ENCODE measurements at regions of chr11 and their contacts with region 1.

Region 1: GRCh38 chr11:111982019-111982464 is 43.2 kb upstream of the DLAT start:
- DNase-seq: peak; percentile 41 to 89 (median 60)
- H3K4me3 ChIP-seq: no peak overlapping the region
- H3K27ac ChIP-seq: peak overlapping the region in 1 of 5 donors; percentile 59
- H3K4me1 ChIP-seq: peaks cover 6 to 24% of the 10 kb centered on the region in 2 donors
- H3K27me3 ChIP-seq: no peaks in the 10 kb centered on the region
- CTCF ChIP-seq: peak; percentile 26 to 70 (median 58)
- POLR2A ChIP-seq: no peak

Region 2: GRCh38 chr11:111878849-111879636 is 103.0 kb before region 1 on chr11 and contains the starts of genes CFAP68 and FDXACB1:
- intact Hi-C with region 1: loop called (anchors 5 to 10 kb)
- DNase-seq: peak; percentile 96 to 99 (median 98)
- H3K4me3 ChIP-seq: peak within 1 kb of the TSS; percentile 21 to 90 (median 42)
- H3K27ac ChIP-seq: peak within 1 kb of the TSS; percentile 78 to 99 (median 93)
- H3K4me1 ChIP-seq: peaks cover 17 to 21% of the 10 kb centered on the region in 2 donors
- H3K27me3 ChIP-seq: no peaks in the 10 kb centered on the region
- CTCF ChIP-seq: peak; percentile 82 to 99 (median 98)
- POLR2A ChIP-seq: peak; percentile 57 to 58
- total RNA-seq, gene CFAP68: 26.6 to 60.7 (median 37.3) TPM
- total RNA-seq, gene FDXACB1: 2.3 to 6.3 (median 3.9) TPM

Region 3: GRCh38 chr11:111911563-111912401 is 70.3 kb before region 1 on chr11 and contains the start of gene CRYAB:
- intact Hi-C with region 1: no loop called
- DNase-seq: peak; percentile 82 to 94 (median 92)
- H3K4me3 ChIP-seq: peak within 1 kb of the TSS in 2 of 4 donors; percentile 13 to 53
- H3K27ac ChIP-seq: peak within 1 kb of the TSS; percentile 51 to 87 (median 61)
- H3K4me1 ChIP-seq: peaks cover 17 to 30% of the 10 kb centered on the region in 2 donors
- H3K27me3 ChIP-seq: no peaks in the 10 kb centered on the region
- CTCF ChIP-seq: no peak
- POLR2A ChIP-seq: peak; percentile 13 to 71
- total RNA-seq, gene CRYAB: 6.8 to 87.7 (median 52.3) TPM

Region 4: GRCh38 chr11:111938687-111939160 is 43.3 kb before region 1 on chr11:
- intact Hi-C with region 1: loop called (anchors 5 kb)
- DNase-seq: peak in 6 of 7 donors; percentile 34 to 77 (median 65)
- H3K4me3 ChIP-seq: peak overlapping the region in 1 of 4 donors; percentile 78
- H3K27ac ChIP-seq: peak overlapping the region; percentile 25 to 91 (median 88)
- H3K4me1 ChIP-seq: peaks cover 57 to 66% of the 10 kb centered on the region in 2 donors
- H3K27me3 ChIP-seq: no peaks in the 10 kb centered on the region
- CTCF ChIP-seq: no peak
- POLR2A ChIP-seq: peak in 1 of 2 donors; percentile 78

Region 5: GRCh38 chr11:111944651-111945051 is 37.4 kb before region 1 on chr11:
- intact Hi-C with region 1: loop called (anchors 5 kb)
- DNase-seq: no peak
- H3K4me3 ChIP-seq: no peak overlapping the region
- H3K27ac ChIP-seq: peak overlapping the region in 4 of 5 donors; percentile 43 to 77 (median 62)
- H3K4me1 ChIP-seq: peaks cover 28 to 42% of the 10 kb centered on the region in 2 donors
- H3K27me3 ChIP-seq: no peaks in the 10 kb centered on the region
- CTCF ChIP-seq: no peak
- POLR2A ChIP-seq: no peak